ENCODE measurements at regions of chr5 and their contacts with region 1.

Region 1: GRCh38 chr5:1118231-1118698 is 6.4 kb upstream of the SLC12A7 start:
- DNase-seq: no peak
- ATAC-seq: no peak
- H3K4me3 ChIP-seq: no peak overlapping the region
- H3K4me3 Mint-ChIP-seq: no peak overlapping the region
- H3K27ac ChIP-seq: no peak overlapping the region
- H3K27ac Mint-ChIP-seq: no peak overlapping the region
- H3K4me1 ChIP-seq: peaks cover 5% of the 10 kb centered on the region
- H3K4me1 Mint-ChIP-seq: no peaks in the 10 kb centered on the region
- H3K27me3 ChIP-seq: no peaks in the 10 kb centered on the region
- H3K27me3 Mint-ChIP-seq: no peaks in the 10 kb centered on the region
- CTCF ChIP-seq: no peak

Region 2: DNA sequence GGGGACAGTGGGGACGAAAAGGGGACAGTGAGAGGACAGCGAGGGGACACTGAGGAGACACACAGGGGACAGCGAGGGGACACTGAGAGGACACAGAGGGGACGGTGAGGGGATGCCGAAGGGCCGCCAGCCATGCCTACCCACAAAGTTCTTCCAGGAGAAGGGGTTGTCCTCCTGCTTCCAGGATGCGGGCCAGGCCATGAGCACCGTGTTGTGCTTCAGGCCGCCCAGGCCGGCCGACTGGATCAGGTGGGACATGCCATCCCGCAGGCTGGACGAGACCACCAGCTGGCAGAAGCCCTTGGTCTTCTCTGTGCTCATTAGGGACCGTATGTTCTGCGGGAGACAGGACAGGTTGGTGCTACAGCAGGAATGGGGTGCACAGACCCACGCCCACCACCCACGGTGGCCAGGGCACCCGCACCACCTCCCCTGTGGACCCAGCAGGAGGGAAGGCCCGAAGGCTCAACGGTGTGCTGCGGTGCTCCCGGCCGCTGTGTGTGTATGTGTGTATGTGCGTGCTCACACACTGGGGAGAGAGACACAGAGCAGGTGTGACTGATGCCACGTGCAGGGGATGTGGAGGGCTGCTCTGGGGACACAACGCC is 53.0 kb before region 1 on chr5:
- CTCF ChIA-PET with region 1: no interaction called
- POLR2A ChIA-PET with region 1: no interaction called
- intact Hi-C with region 1: no loop called
- DNase-seq: no peak
- ATAC-seq: no peak
- H3K4me3 ChIP-seq: no peak overlapping the region
- H3K4me3 Mint-ChIP-seq: no peak overlapping the region
- H3K27ac ChIP-seq: no peak overlapping the region
- H3K27ac Mint-ChIP-seq: no peak overlapping the region
- H3K4me1 ChIP-seq: no peaks in the 10 kb centered on the region
- H3K4me1 Mint-ChIP-seq: no peaks in the 10 kb centered on the region
- H3K27me3 ChIP-seq: no peaks in the 10 kb centered on the region
- H3K27me3 Mint-ChIP-seq: no peaks in the 10 kb centered on the region
- CTCF ChIP-seq: no peak

Region 3: GRCh38 chr5:1105350-1106265 is 12.7 kb before region 1 on chr5:
- CTCF ChIA-PET with region 1: no interaction called
- POLR2A ChIA-PET with region 1: interaction called, 12 read pairs
- intact Hi-C with region 1: no loop called
- DNase-seq: peak in 13 of 14 experiments; percentile 16 to 93 (median 53)
- ATAC-seq: peak; percentile 77
- H3K4me3 ChIP-seq: peak overlapping the region; percentile 52
- H3K4me3 Mint-ChIP-seq: peak overlapping the region; percentile 91
- H3K27ac ChIP-seq: peak overlapping the region; percentile 62 to 81
- H3K27ac Mint-ChIP-seq: peak overlapping the region; percentile 99
- H3K4me1 ChIP-seq: peaks cover 100% of the 10 kb centered on the region
- H3K4me1 Mint-ChIP-seq: peaks cover 87% of the 10 kb centered on the region
- H3K27me3 ChIP-seq: no peaks in the 10 kb centered on the region
- H3K27me3 Mint-ChIP-seq: no peaks in the 10 kb centered on the region
- CTCF ChIP-seq: no peak

Region 4: GRCh38 chr5:1294835-1295649 is 176.8 kb after region 1 on chr5 and contains the start of gene TERT:
- CTCF ChIA-PET with region 1: no interaction called
- POLR2A ChIA-PET with region 1: no interaction called
- intact Hi-C with region 1: no loop called
- DNase-seq: peak; percentile 66 to 93 (median 79)
- ATAC-seq: peak; percentile 86
- H3K4me3 ChIP-seq: peak within 1 kb of the TSS; percentile 34
- H3K4me3 Mint-ChIP-seq: peak within 1 kb of the TSS; percentile 48
- H3K27ac ChIP-seq: no peak within 1 kb of the TSS
- H3K27ac Mint-ChIP-seq: no peak within 1 kb of the TSS
- H3K4me1 ChIP-seq: peaks cover 22% of the 10 kb centered on the region
- H3K4me1 Mint-ChIP-seq: peaks cover 4% of the 10 kb centered on the region
- H3K27me3 ChIP-seq: no peaks in the 10 kb centered on the region
- H3K27me3 Mint-ChIP-seq: no peaks in the 10 kb centered on the region
- CTCF ChIP-seq: no peak
- total RNA-seq, gene TERT: 0.55 to 0.84 TPM

Region 5: DNA sequence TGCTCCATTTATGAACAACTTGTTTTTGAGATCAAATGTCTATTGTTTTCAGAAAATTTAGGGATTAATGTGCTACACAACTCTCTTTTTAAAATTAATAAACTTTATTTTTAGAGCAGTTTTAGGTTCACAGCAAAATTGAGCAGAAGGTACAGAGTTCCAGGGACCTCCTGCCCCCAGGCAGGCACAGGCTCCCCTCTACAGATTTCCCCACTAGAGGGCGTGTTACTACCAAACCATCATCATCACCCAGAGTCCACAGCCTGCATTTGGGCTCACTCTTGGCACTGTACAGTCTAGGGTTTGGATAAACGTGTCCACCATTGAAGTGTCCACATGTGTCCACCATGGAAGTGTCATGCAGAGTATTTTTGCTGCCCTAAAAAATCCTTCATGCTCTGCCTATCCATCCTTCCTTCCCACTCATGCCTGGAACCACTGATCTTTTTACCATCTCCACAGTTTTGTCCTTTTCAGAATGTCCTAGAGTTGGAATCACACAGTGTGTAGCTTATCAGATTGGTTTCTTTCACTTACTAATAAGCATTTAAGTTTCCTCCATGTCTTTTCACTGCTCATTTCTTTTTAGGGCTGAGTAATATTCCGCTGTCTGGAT is 619.6 kb after region 1 on chr5:
- CTCF ChIA-PET with region 1: no interaction called
- POLR2A ChIA-PET with region 1: no interaction called
- intact Hi-C with region 1: no loop called
- DNase-seq: peak in 12 of 14 experiments; percentile 14 to 69 (median 32)
- ATAC-seq: peak; percentile 59
- H3K4me3 ChIP-seq: no peak overlapping the region
- H3K4me3 Mint-ChIP-seq: no peak overlapping the region
- H3K27ac ChIP-seq: no peak overlapping the region
- H3K27ac Mint-ChIP-seq: no peak overlapping the region
- H3K4me1 ChIP-seq: no peaks in the 10 kb centered on the region
- H3K4me1 Mint-ChIP-seq: no peaks in the 10 kb centered on the region
- H3K27me3 ChIP-seq: peaks cover 2 to 6% of the 10 kb centered on the region in 2 experiments
- H3K27me3 Mint-ChIP-seq: peaks cover 31% of the 10 kb centered on the region
- CTCF ChIP-seq: peak; percentile 86